ENCODE measurements at regions of chr16 and their contacts with region 1.

Region 1: GRCh38 chr16:67480833-67481560 is at the start of gene ATP6V0D1:
- H3K4me3 ChIP-seq: peak within 1 kb of the TSS; percentile 97
- H3K27ac ChIP-seq: peak within 1 kb of the TSS; percentile 18; the same call in 1 of the 2 replicates
- H3K4me1 ChIP-seq: no peaks in the 10 kb centered on the region
- CTCF ChIP-seq: peak; percentile 96

Region 2: DNA sequence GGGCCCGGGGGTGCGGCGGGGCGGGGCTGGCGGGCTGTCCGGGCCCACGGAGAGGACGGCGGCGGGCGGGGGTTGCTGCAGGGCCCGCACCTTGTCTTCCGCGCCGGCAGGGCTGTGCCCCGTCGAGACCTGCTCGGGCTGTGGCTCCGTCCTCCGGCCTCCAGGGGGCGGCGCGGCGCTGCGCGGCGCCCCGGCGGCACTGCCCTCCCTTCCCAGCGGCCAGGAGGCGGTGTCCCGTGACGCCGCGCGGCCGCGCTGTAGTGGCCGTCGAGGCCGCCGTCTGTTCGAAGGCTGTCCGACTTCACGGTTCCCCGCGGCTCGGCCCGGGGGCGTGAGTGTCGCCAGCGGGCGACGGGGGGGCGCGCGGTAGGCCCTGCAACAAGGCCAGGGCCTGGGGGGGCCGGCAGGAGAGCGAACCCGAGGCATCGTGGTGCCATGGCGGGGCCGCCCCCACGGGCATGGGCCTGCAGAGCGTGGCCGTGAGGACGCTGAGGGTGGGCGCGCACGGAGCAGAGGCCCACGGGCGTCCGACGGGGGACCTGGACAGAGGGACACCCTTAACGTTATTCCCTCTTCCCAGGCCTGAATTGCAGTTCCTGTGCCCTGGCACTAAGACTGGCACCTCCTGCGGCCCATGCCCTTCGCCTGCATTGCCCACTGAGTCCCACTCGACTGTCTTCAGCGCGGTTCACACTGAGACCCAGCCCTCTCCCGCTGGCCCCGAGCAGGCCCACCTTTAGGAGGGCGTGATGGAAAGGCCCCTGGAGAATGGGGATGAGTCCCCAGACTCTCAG is 201.5 kb before region 1 on chr16 and contains the start of gene PLEKHG4:
- CTCF ChIA-PET with region 1: no interaction called
- POLR2A ChIA-PET with region 1: no interaction called
- H3K4me3 ChIP-seq: peak within 1 kb of the TSS; percentile 50
- H3K27ac ChIP-seq: peak within 1 kb of the TSS; percentile 50; the same call in 1 of the 2 replicates
- H3K4me1 ChIP-seq: no peaks in the 10 kb centered on the region
- CTCF ChIP-seq: no peak

Region 3: DNA sequence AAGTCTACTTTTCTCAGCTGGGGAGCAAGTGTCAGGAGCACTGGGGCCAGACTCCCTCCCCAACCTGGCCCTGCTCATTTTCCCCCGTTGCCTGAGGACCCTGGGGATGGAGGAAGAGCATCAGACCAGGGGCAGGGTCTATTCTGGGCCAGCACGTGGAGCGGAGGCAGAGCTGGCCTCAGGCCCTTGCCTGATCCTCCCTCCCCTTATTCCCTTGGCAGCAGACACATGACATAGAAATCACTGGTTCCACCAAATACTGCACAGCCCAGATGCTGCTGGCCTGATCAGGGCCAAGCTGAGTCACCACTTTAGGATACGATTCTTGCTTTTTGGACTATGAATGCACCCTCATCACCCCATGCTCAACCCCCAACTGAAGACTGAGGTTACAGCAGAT is 18.1 kb after region 1 on chr16:
- CTCF ChIA-PET with region 1: interaction called, 12 read pairs
- POLR2A ChIA-PET with region 1: interaction called, 4 read pairs
- H3K4me3 ChIP-seq: no peak overlapping the region
- H3K27ac ChIP-seq: no peak overlapping the region
- H3K4me1 ChIP-seq: no peaks in the 10 kb centered on the region
- CTCF ChIP-seq: no peak